ENCODE measurements at regions of chr7 and their contacts with region 1.

Region 1: DNA sequence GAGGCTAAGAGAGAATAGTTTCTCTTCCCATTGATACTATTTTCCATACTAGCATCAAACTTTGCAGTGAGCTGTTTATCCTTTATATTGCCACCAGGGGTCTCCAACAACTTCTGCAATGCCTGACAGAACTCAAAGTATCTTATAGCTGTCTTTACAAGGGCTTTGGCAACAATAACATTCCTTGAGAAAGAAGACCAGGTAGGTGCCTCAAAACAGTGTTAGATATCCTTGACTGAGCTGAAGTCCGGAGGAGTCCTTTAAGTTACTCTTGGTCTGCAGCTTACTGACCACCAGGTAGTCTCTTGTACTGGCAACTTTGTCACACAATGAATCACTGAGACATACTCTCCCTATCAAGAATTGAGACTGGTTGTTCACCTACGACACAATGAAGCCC is 30.0 kb upstream of the TES start:
- DNase-seq: peak in 5 of 9 experiments; percentile 16 to 76 (median 51)
- ATAC-seq: peak; percentile 80
- H3K4me3 ChIP-seq: no peak overlapping the region
- H3K4me3 Mint-ChIP-seq: no peak overlapping the region
- H3K27ac ChIP-seq: no peak overlapping the region
- H3K27ac Mint-ChIP-seq: no peak overlapping the region
- H3K4me1 ChIP-seq: no peaks in the 10 kb centered on the region
- H3K4me1 Mint-ChIP-seq: peaks cover 3% of the 10 kb centered on the region
- H3K27me3 ChIP-seq: no peaks in the 10 kb centered on the region
- H3K27me3 Mint-ChIP-seq: peaks cover 3% of the 10 kb centered on the region
- CTCF ChIP-seq: peak; percentile 77

Region 2: GRCh38 chr7:115499956-115500355 is 680.3 kb before region 1 on chr7:
- CTCF ChIA-PET with region 1: no interaction called
- POLR2A ChIA-PET with region 1: no interaction called
- intact Hi-C with region 1: no loop called
- DNase-seq: no peak
- ATAC-seq: no peak
- H3K4me3 ChIP-seq: no peak overlapping the region
- H3K4me3 Mint-ChIP-seq: no peak overlapping the region
- H3K27ac ChIP-seq: no peak overlapping the region
- H3K27ac Mint-ChIP-seq: no peak overlapping the region
- H3K4me1 ChIP-seq: no peaks in the 10 kb centered on the region
- H3K4me1 Mint-ChIP-seq: no peaks in the 10 kb centered on the region
- H3K27me3 ChIP-seq: no peaks in the 10 kb centered on the region
- H3K27me3 Mint-ChIP-seq: peaks cover 7% of the 10 kb centered on the region
- CTCF ChIP-seq: no peak

Region 3: GRCh38 chr7:116195451-116195850 is 15.1 kb after region 1 on chr7:
- CTCF ChIA-PET with region 1: interaction called, 16 read pairs
- POLR2A ChIA-PET with region 1: no interaction called
- intact Hi-C with region 1: no loop called
- DNase-seq: no peak
- ATAC-seq: no peak
- H3K4me3 ChIP-seq: no peak overlapping the region
- H3K4me3 Mint-ChIP-seq: no peak overlapping the region
- H3K27ac ChIP-seq: no peak overlapping the region
- H3K27ac Mint-ChIP-seq: no peak overlapping the region
- H3K4me1 ChIP-seq: no peaks in the 10 kb centered on the region
- H3K4me1 Mint-ChIP-seq: no peaks in the 10 kb centered on the region
- H3K27me3 ChIP-seq: no peaks in the 10 kb centered on the region
- H3K27me3 Mint-ChIP-seq: peaks cover 2% of the 10 kb centered on the region
- CTCF ChIP-seq: no peak

Region 4: DNA sequence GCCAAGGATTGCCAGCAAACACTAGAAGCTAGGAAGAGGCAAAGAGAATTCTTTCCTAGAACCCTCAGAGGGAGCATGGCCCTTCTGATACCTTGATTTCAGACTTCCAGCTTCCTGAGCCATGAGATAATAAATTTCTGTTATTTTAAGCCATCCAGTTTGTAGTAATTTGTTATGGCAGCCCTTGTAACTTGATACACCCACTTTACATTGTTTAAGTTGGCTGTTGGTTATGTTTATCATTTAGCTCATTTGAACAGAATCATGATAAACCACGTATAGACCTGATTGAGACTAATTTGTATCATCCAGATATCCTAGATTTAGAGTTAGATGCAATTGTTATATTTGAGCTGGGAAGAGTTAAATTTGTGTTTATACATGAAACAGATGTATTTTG is 20.7 kb after region 1 on chr7:
- CTCF ChIA-PET with region 1: interaction called, 16 read pairs
- POLR2A ChIA-PET with region 1: no interaction called
- intact Hi-C with region 1: no loop called
- DNase-seq: no peak
- ATAC-seq: no peak
- H3K4me3 ChIP-seq: no peak overlapping the region
- H3K4me3 Mint-ChIP-seq: no peak overlapping the region
- H3K27ac ChIP-seq: no peak overlapping the region
- H3K27ac Mint-ChIP-seq: no peak overlapping the region
- H3K4me1 ChIP-seq: no peaks in the 10 kb centered on the region
- H3K4me1 Mint-ChIP-seq: no peaks in the 10 kb centered on the region
- H3K27me3 ChIP-seq: no peaks in the 10 kb centered on the region
- H3K27me3 Mint-ChIP-seq: no peaks in the 10 kb centered on the region
- CTCF ChIP-seq: no peak

Region 5: DNA sequence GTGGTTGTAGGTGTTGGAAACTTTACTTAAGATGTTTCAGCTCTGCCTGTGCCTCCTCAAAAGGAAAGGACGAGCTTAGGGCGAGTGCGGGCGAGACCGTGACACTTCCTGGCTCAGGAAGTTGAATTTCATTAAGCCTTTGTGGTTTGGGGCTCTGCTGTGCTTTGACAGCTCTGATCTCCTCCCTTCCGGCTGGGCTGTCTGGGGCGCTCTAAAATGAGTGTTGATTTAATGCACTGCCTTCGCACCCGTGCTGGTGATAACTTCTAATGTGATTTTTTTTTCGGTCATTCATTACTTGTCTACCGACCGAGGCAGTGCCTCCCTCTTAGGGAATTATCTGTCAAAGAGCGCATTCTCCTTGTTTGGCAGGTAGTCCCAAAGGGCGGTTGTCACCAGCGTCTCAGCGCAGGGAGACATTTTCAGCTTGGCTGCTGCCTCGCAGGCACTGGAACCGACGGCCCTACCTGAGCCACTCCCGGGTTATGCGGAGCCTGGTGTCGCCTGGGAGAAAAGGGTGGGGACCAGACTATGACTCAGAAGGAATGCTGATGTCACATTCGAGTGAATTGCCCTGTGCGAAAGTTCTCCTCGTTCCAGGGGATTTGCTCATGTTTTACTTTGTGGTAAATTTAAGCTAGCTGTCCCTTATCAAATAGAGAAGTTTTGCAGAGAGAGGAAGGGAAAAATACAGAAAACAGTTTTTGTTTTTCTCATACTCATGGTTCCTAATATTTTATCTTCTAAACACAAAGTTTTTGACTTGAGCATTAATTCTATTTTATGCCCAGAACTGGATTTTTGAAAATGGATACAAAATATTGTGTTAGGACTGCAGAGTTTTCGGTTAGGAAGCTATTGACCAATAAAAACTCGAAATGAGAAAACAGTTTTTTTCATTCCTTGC is 31.0 kb after region 1 on chr7:
- CTCF ChIA-PET with region 1: interaction called, 36 read pairs
- POLR2A ChIA-PET with region 1: interaction called, 8 read pairs
- intact Hi-C with region 1: loop called (anchors 1 to 2 kb)
- DNase-seq: peak; percentile 62 to 94 (median 83)
- ATAC-seq: peak; percentile 77
- H3K4me3 ChIP-seq: peak overlapping the region; percentile 71 to 86
- H3K4me3 Mint-ChIP-seq: peak overlapping the region; percentile 98
- H3K27ac ChIP-seq: peak overlapping the region; percentile 91 to 93
- H3K27ac Mint-ChIP-seq: peak overlapping the region; percentile 99
- H3K4me1 ChIP-seq: peaks cover 50% of the 10 kb centered on the region
- H3K4me1 Mint-ChIP-seq: peaks cover 57% of the 10 kb centered on the region
- H3K27me3 ChIP-seq: no peaks in the 10 kb centered on the region
- H3K27me3 Mint-ChIP-seq: no peaks in the 10 kb centered on the region
- CTCF ChIP-seq: no peak

Region 6: GRCh38 chr7:116224492-116225098 is 44.3 kb after region 1 on chr7:
- CTCF ChIA-PET with region 1: interaction called, 61 read pairs
- POLR2A ChIA-PET with region 1: no interaction called
- intact Hi-C with region 1: no loop called
- DNase-seq: peak in 3 of 9 experiments; percentile 15 to 77 (median 60)
- ATAC-seq: peak; percentile 73
- H3K4me3 ChIP-seq: peak overlapping the region in 1 of 2 experiments; percentile 13
- H3K4me3 Mint-ChIP-seq: peak overlapping the region; percentile 69
- H3K27ac ChIP-seq: peak overlapping the region in 1 of 2 experiments; percentile 67
- H3K27ac Mint-ChIP-seq: peak overlapping the region; percentile 49
- H3K4me1 ChIP-seq: peaks cover 76% of the 10 kb centered on the region
- H3K4me1 Mint-ChIP-seq: peaks cover 87% of the 10 kb centered on the region
- H3K27me3 ChIP-seq: no peaks in the 10 kb centered on the region
- H3K27me3 Mint-ChIP-seq: no peaks in the 10 kb centered on the region
- CTCF ChIP-seq: no peak

Region 7: DNA sequence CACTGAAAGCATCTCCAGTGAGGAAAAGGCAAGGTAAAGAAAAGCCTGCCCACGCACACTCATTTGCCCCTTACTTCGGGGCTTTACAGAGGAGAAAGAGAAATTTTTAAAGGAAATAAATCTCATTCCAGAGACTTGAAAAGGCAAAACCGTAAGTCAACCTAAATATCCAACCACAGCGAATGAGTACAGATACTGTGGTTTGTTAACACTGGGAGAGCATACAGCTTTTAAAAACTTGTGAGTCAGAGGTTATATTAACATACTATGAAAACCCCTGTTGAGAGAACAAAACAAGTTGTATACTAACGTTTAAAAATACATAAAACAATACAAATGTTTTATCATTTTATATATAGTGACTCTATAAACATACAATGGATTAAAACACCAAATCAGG is 744.4 kb after region 1 on chr7:
- CTCF ChIA-PET with region 1: no interaction called
- POLR2A ChIA-PET with region 1: no interaction called
- intact Hi-C with region 1: no loop called
- DNase-seq: no peak
- ATAC-seq: no peak
- H3K4me3 ChIP-seq: no peak overlapping the region
- H3K4me3 Mint-ChIP-seq: no peak overlapping the region
- H3K27ac ChIP-seq: no peak overlapping the region
- H3K27ac Mint-ChIP-seq: no peak overlapping the region
- H3K4me1 ChIP-seq: no peaks in the 10 kb centered on the region
- H3K4me1 Mint-ChIP-seq: no peaks in the 10 kb centered on the region
- H3K27me3 ChIP-seq: no peaks in the 10 kb centered on the region
- H3K27me3 Mint-ChIP-seq: no peaks in the 10 kb centered on the region
- CTCF ChIP-seq: no peak